Esophagus squamous epithelium (tissue), 5 donors: ENCODE measurements at regions of chr1 and their contacts with region 1.

Region 1: DNA sequence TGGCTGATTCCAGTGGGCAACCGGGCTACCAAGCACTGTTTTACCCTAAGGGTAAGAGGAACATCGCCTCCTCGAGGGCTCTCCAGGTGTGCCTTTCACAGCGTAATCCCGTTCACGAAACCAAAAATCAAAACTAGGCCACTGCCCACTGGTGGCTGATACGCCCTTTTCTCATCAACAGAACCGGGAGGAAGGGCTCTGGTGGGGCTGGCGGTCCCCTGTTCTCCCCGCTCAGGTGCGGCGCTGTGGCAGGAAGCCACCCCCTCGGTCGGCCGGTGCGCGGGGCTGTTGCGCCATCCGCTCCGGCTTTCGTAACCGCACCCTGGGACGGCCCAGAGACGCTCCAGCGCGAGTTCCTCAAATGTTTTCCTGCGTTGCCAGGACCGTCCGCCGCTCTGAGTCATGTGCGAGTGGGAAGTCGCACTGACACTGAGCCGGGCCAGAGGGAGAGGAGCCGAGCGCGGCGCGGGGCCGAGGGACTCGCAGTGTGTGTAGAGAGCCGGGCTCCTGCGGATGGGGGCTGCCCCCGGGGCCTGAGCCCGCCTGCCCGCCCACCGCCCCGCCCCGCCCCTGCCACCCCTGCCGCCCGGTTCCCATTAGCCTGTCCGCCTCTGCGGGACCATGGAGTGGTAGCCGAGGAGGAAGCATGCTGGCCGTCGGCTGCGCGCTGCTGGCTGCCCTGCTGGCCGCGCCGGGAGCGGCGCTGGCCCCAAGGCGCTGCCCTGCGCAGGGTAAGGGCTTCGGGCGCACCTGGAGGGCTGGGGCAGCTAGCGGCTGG is at the start of gene IL6R:
- DNase-seq: peak; percentile 53
- H3K4me3 ChIP-seq: peak within 1 kb of the TSS; percentile 63 to 86 (median 66)
- H3K27ac ChIP-seq: peak within 1 kb of the TSS; percentile 90 to 98 (median 94)
- H3K4me1 ChIP-seq: peaks cover 24 to 64% (median 39%) of the 10 kb centered on the region in 3 donors
- H3K27me3 ChIP-seq: no peaks in the 10 kb centered on the region
- CTCF ChIP-seq: peak; percentile 41 to 70 (median 62)
- POLR2A ChIP-seq: peak in 3 of 4 donors; percentile 33 to 92 (median 89)
- total RNA-seq, gene IL6R: 6.4 to 47.7 (median 8.1) TPM

Region 2: GRCh38 chr1:154335025-154335714 is 70.0 kb before region 1 on chr1:
- intact Hi-C with region 1: no loop called
- DNase-seq: peak; percentile 48
- H3K4me3 ChIP-seq: peak overlapping the region in 1 of 4 donors; percentile 15
- H3K27ac ChIP-seq: peak overlapping the region; percentile 29 to 78 (median 68)
- H3K4me1 ChIP-seq: peaks cover 0 to 45% (median 10%) of the 10 kb centered on the region in 3 donors
- H3K27me3 ChIP-seq: no peaks in the 10 kb centered on the region
- CTCF ChIP-seq: peak; percentile 86 to 91 (median 86)
- POLR2A ChIP-seq: no peak

Region 3: GRCh38 chr1:154479764-154480421 is 74.7 kb after region 1 on chr1:
- intact Hi-C with region 1: loop called (anchors 10 kb)
- DNase-seq: no peak
- H3K4me3 ChIP-seq: no peak overlapping the region
- H3K27ac ChIP-seq: peak overlapping the region in 1 of 4 donors; percentile 42
- H3K4me1 ChIP-seq: peaks cover 0 to 23% (median 4%) of the 10 kb centered on the region in 3 donors
- H3K27me3 ChIP-seq: no peaks in the 10 kb centered on the region
- CTCF ChIP-seq: peak; percentile 86 to 98 (median 93)
- POLR2A ChIP-seq: no peak